Sigmoid colon (tissue), 7 donors: ENCODE measurements at regions of chr19 and their contacts with region 1.

Region 1: GRCh38 chr19:47273313-47273977 is 1.2 kb upstream of the INAFM1 start:
- DNase-seq: peak; percentile 97
- H3K4me3 ChIP-seq: peak overlapping the region; percentile 69 to 73 (median 70)
- H3K27ac ChIP-seq: peak overlapping the region; percentile 93 to 97 (median 97)
- H3K4me1 ChIP-seq: peaks cover 0 to 45% (median 42%) of the 10 kb centered on the region in 4 donors
- H3K27me3 ChIP-seq: no peaks in the 10 kb centered on the region
- CTCF ChIP-seq: no peak
- EP300 ChIP-seq: no peak
- POLR2A ChIP-seq: peak; percentile 78 to 82

Region 2: DNA sequence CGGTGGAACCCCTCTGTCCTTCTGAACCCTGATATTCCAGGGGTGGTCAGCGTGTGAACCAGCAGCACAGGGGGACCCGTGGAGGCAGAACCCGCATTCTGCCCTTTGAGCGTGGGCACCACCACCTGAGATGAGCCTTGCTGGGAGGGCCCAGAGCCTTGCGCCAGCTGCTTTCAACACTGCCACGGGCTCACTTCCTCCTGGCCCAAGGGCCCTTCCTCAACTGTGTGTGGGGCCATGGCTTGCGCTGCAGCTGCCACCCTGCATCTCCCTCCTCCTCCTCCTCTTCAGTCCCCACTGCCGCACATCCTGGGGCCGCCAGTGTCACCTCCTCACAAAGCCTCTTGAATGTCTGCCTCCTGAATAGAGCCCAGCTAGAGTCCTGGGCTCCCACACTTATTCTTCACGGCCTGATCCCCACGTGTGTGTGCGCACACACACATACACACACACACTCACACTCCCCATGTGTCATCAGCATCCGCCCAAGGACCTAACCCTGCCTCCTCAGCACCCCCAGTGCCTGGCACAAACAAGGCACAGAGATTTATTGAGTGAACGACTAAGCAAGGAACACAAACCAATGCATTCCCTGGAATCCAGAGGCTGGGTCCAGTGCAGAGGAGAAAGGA is 198.2 kb before region 1 on chr19:
- intact Hi-C with region 1: no loop called
- DNase-seq: no peak
- H3K4me3 ChIP-seq: no peak overlapping the region
- H3K27ac ChIP-seq: no peak overlapping the region
- H3K4me1 ChIP-seq: peaks cover 0 to 6% (median 4%) of the 10 kb centered on the region in 4 donors
- H3K27me3 ChIP-seq: no peaks in the 10 kb centered on the region
- CTCF ChIP-seq: no peak
- EP300 ChIP-seq: no peak
- POLR2A ChIP-seq: no peak

Region 3: GRCh38 chr19:47225746-47226425 is 47.6 kb before region 1 on chr19:
- intact Hi-C with region 1: loop called (anchors 2 kb)
- DNase-seq: peak; percentile 96
- H3K4me3 ChIP-seq: peak overlapping the region; percentile 46 to 99 (median 87)
- H3K27ac ChIP-seq: peak overlapping the region; percentile 99 to 100 (median 100)
- H3K4me1 ChIP-seq: peaks cover 0 to 49% (median 46%) of the 10 kb centered on the region in 4 donors
- H3K27me3 ChIP-seq: no peaks in the 10 kb centered on the region
- CTCF ChIP-seq: peak in 1 of 4 experiments; percentile 42
- EP300 ChIP-seq: no peak
- POLR2A ChIP-seq: peak; percentile 74 to 83

Region 4: DNA sequence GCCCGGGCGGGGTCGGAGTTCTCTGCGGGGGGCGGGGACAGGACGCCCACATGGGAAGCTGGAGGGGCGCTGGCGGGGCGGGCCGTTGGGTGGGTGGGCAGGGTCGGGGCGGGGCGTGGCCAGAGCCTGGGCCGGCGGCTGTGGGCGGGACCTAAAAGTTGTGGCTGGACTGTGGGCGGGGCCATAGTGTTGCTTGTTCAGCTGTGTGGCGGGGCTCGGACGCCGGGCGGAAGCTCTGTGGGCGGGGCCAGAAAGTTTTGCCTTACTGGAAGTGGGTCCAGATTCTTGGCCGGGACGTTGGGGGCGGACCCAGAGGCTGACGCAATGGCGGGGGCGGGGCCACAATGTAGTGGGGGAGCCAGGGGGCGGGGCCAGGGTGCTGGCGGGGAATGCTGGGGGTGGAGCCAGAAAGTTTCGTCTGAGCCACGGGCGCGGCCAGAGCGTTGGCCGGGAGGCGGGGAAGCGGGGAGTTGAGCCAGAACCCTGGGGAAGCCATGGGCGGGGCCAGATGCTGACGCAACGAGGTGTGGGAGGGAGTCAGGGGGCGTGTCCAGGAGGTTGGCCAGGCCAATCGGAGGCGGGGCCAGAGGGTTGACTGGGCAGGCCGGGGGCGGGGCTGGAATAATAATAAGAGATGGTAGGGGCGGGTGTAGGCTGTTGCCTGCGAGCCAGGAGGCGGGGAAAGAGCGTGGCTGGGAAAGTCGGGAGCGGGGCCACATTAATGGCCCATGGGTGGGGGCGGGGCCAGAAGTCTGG is 16.6 kb before region 1 on chr19:
- intact Hi-C with region 1: loop called (anchors 1 kb)
- DNase-seq: peak; percentile 100
- H3K4me3 ChIP-seq: peak overlapping the region; percentile 55 to 73 (median 65)
- H3K27ac ChIP-seq: peak overlapping the region; percentile 88 to 98 (median 92)
- H3K4me1 ChIP-seq: peaks cover 0 to 35% (median 30%) of the 10 kb centered on the region in 4 donors
- H3K27me3 ChIP-seq: no peaks in the 10 kb centered on the region
- CTCF ChIP-seq: no peak
- EP300 ChIP-seq: no peak
- POLR2A ChIP-seq: no peak

Region 5: GRCh38 chr19:47296036-47296435 is 22.6 kb after region 1 on chr19:
- intact Hi-C with region 1: no loop called
- DNase-seq: peak; percentile 79
- H3K4me3 ChIP-seq: no peak overlapping the region
- H3K27ac ChIP-seq: no peak overlapping the region
- H3K4me1 ChIP-seq: no peaks in the 10 kb centered on the region
- H3K27me3 ChIP-seq: no peaks in the 10 kb centered on the region
- CTCF ChIP-seq: peak; percentile 42 to 70 (median 64)
- EP300 ChIP-seq: no peak
- POLR2A ChIP-seq: no peak

Region 6: GRCh38 chr19:47357788-47358680 is 84.6 kb after region 1 on chr19:
- intact Hi-C with region 1: no loop called
- DNase-seq: no peak
- H3K4me3 ChIP-seq: no peak overlapping the region
- H3K27ac ChIP-seq: no peak overlapping the region
- H3K4me1 ChIP-seq: peaks cover 0 to 6% (median 0%) of the 10 kb centered on the region in 4 donors
- H3K27me3 ChIP-seq: no peaks in the 10 kb centered on the region
- CTCF ChIP-seq: no peak
- EP300 ChIP-seq: no peak
- POLR2A ChIP-seq: no peak

Region 7: DNA sequence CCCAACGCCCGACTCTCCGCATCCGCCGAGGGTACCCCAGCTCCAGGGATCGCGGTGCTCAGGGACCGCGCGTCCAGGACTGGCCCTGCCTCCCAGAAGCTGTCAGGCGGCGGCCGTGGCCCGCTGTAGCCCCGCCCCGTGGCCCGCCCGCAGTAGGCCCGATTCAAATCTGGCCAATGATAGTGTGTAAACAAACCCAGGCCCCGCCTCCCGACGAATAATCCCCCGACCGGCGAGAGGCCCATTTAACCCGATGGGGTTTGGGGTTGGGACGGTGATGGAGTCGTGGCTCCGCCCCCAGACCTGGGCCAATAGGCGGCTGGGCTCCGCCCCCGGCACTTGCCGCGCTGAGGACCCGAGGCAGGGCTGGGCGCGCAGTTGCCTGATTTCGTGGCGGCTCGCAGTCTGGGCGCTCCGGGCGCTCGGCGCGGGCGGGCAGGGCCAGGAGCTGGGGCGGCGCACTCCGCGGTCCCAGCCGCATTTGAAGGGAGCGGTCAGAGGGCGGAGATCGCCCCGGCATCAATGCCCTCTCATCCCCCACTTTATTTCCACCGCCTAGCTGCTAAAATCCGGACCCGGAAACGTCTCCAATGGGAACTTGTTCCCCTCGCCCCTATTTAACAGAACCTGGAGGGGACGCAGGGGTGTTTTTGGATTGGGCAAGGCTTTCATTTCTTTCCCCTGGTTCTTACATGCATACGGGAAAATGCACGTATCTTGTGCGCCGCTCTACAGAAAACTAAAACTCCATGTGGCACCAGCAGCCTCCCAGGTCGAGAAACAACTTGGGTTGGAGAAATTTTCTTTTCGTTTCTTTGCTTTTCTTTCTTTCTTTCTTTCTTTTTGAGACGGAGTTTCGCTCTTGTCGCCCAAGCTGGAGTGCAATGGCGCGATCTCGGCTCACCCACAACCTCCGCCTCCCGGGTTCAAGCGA is 327.1 kb after region 1 on chr19:
- intact Hi-C with region 1: loop called (anchors 10 kb)
- DNase-seq: peak; percentile 100
- H3K4me3 ChIP-seq: peak overlapping the region; percentile 49 to 56 (median 52)
- H3K27ac ChIP-seq: peak overlapping the region; percentile 89 to 94 (median 92)
- H3K4me1 ChIP-seq: peaks cover 0 to 23% (median 21%) of the 10 kb centered on the region in 4 donors
- H3K27me3 ChIP-seq: no peaks in the 10 kb centered on the region
- CTCF ChIP-seq: no peak
- EP300 ChIP-seq: peak in 1 of 4 donors; percentile 83
- POLR2A ChIP-seq: peak; percentile 84 to 85

Region 8: GRCh38 chr19:47713046-47714021 is 439.9 kb after region 1 on chr19 and contains the start of gene EHD2:
- intact Hi-C with region 1: loop called (anchors 10 kb)
- DNase-seq: peak; percentile 93
- H3K4me3 ChIP-seq: peak within 1 kb of the TSS; percentile 79 to 99 (median 92)
- H3K27ac ChIP-seq: peak within 1 kb of the TSS; percentile 95 to 99 (median 96)
- H3K4me1 ChIP-seq: peaks cover 0 to 44% (median 42%) of the 10 kb centered on the region in 4 donors
- H3K27me3 ChIP-seq: no peaks in the 10 kb centered on the region
- CTCF ChIP-seq: peak; percentile 93 to 98 (median 97)
- EP300 ChIP-seq: no peak
- POLR2A ChIP-seq: peak; percentile 82 to 90
- total RNA-seq, gene EHD2: 41.8 to 184 (median 72.4) TPM

Region 9: GRCh38 chr19:48624067-48624594 is 1350.7 kb after region 1 on chr19:
- intact Hi-C with region 1: loop called (anchors 10 kb)
- DNase-seq: peak; percentile 99
- H3K4me3 ChIP-seq: peak overlapping the region; percentile 41 to 55 (median 50)
- H3K27ac ChIP-seq: peak overlapping the region; percentile 82 to 87 (median 84)
- H3K4me1 ChIP-seq: peaks cover 0 to 45% (median 29%) of the 10 kb centered on the region in 4 donors
- H3K27me3 ChIP-seq: no peaks in the 10 kb centered on the region
- CTCF ChIP-seq: no peak
- EP300 ChIP-seq: no peak
- POLR2A ChIP-seq: peak in 1 of 2 donors; percentile 40